Right ventricle myocardium inferior (tissue), 1 donor: ENCODE measurements at regions of chr17 and their contacts with region 1.

Region 1: DNA sequence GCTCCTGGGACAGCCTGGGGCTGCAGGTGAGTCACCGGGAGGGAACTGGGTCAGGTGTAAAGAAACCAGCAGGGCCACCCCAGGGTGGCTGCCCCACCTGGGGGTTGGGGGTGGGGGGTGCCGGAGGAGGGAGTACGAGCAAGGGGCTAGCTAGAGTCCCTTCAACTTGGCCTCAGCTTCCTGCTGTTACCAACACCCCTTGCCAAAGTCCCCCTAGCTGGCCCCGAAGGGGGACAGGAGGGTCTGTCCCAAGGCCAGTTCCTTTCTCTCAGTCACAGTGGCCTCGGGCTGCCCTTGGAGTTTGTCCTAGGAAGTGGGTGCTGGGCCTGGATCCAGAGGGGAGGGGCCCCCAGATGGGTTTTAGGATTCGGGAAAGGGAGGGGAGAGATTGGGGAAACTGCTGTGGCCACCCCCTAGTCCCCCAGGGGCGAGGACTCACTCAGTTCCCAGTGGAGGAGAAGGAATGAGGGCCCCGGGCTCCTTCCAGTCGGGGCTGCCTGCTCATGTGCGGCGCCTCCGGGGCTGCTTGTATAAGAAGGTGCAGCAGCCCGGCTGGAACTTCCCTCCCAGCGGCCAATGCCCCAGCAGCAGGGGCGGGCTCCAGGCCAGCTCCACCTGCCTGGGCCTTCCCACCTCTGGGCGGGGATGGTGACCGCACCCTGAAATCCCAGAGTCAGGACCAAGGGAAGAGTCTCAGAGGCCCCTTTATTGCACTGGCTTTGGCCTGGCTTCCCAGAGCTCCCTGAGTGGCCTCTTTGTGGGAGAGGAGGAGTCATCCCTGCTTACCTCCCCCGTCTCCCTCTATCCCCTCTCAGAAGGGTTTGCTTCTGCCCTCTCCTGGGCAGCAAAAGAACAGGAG is 7.3 kb downstream of the ARHGAP27 start:
- DNase-seq: peak; percentile 77
- ATAC-seq: peak; percentile 75

Region 2: GRCh38 chr17:45384047-45384788 is 41.1 kb before region 1 on chr17:
- intact Hi-C with region 1: no loop called
- DNase-seq: no peak
- ATAC-seq: no peak

Region 3: GRCh38 chr17:45394913-45395568 is 30.3 kb before region 1 on chr17:
- intact Hi-C with region 1: loop called (anchors 1 kb)
- DNase-seq: peak; percentile 82
- ATAC-seq: peak; percentile 63